Left cardiac atrium (tissue), 4 donors: ENCODE measurements at regions of chr3 and their contacts with region 1.

Region 1: DNA sequence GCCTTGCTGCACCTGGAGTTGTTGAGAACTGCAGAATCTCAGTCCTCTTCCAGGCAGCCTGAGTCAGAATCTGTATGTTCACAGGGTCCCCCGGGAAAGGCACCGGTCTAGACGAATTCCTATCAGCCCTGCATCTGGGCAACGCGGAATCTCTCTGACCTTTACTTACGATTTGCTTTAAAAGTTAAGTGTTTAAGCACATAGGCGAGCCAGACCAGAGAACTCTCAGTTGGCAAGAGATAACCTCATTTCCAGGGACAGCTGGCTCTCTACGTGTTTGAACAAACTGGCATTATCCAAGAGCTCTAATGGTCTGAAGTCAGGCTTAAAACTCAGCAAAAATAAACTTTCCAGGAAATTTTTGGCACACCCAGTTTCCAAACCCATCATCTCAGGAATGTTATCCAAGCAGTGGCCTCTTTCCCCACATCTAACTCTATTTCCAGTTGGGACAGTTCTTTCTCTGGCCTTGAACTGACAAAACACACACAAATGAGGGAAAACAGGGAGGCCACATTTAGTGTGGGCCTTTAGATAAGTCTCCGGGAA is 53.4 kb downstream of the HES1 start:
- DNase-seq: peak; percentile 48
- ATAC-seq: peak; percentile 64 to 74

Region 2: GRCh38 chr3:194070634-194071409 is 118.5 kb before region 1 on chr3:
- intact Hi-C with region 1: no loop called
- DNase-seq: peak; percentile 91
- ATAC-seq: peak; percentile 91 to 92

Region 3: DNA sequence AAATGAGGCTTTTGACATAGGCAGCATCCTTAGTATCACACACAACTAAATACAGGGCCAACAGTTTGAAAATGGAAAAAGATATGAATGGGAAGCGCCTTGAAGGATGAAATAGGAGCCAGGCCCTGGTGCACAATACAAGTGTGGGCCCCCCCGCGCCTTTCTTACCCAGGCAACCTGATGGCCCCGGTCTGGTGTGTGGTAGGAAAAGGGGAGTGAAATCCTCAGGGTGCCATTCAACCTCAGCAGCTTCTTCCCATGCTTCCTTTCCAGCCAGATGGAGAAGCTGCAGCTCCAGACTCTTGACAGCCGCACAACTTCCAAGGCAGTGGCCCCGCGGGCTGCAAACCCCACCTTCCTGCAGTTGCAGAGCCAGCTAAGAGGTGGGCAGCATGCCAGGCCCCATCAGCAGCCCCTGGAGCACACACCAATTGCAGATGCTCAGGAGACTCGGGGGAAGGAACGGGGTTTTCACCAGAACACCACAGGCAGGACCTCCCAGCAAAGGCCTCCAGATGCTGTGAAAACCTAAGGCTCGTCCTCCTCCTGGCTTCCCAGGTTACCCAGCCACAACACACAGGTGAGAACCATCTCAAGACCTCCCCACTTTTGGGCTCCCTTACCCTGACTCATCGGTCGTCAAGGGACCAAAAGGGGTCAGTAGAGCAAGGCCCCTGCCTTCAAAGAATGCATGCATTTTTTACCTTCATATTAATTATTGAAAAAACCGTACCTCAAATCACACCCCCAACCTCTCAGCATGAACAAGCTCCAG is 60.2 kb after region 1 on chr3:
- intact Hi-C with region 1: loop called in 1 of 2 experiments (anchors 10 kb)
- DNase-seq: no peak
- ATAC-seq: no peak